ENCODE measurements at regions of chr20 and their contacts with region 1.

Region 1: DNA sequence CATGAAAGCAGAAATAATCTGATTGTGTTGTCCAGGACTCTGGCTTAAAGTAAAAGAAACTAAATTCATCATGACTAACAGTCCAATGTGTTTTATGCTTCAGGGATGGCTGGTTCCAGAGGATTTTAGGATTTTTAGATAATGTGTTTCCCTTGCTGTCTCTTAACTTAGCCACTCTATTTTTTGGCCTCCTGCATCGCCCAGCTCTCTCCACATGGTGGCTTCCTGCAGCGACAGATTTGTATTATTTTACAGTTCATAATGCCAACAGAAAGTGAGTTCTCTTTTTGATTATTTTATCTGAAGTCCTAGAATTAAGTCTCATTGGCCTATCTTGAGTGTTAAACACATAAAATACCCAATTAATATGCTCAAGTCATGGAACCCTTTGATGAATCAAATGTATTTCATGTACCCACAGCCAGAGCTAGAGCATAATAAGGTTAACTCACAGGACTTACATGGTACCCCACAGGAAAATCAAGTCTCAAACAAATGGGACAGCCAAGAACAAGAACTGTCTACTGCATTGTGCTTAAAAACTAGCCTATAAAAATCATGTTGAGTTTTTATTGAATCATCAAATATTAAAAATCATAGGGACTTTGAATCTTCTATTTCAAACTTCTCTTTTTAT is 582.5 kb downstream of the DOK5 start:
- DNase-seq: no peak
- ATAC-seq: no peak
- H3K4me3 ChIP-seq: no peak overlapping the region
- H3K27ac ChIP-seq: no peak overlapping the region
- H3K4me1 ChIP-seq: no peaks in the 10 kb centered on the region
- H3K27me3 ChIP-seq: no peaks in the 10 kb centered on the region
- CTCF ChIP-seq: no peak
- POLR2A ChIP-seq: no peak

Region 2: GRCh38 chr20:54510546-54511139 is 547.3 kb before region 1 on chr20:
- in situ Hi-C with region 1: no loop called
- intact Hi-C with region 1: no loop called
- DNase-seq: peak; percentile 14 to 61
- ATAC-seq: peak; percentile 66 to 87
- H3K4me3 ChIP-seq: no peak overlapping the region
- H3K27ac ChIP-seq: peak overlapping the region; percentile 3 to 63 (median 28)
- H3K4me1 ChIP-seq: peaks cover 6 to 9% of the 10 kb centered on the region in 2 donors
- H3K27me3 ChIP-seq: no peaks in the 10 kb centered on the region
- CTCF ChIP-seq: no peak
- POLR2A ChIP-seq: no peak

Region 3: GRCh38 chr20:54929195-54929594 is 128.7 kb before region 1 on chr20:
- in situ Hi-C with region 1: no loop called
- intact Hi-C with region 1: no loop called
- DNase-seq: no peak
- ATAC-seq: no peak
- H3K4me3 ChIP-seq: no peak overlapping the region
- H3K27ac ChIP-seq: no peak overlapping the region
- H3K4me1 ChIP-seq: no peaks in the 10 kb centered on the region
- H3K27me3 ChIP-seq: no peaks in the 10 kb centered on the region
- CTCF ChIP-seq: no peak
- POLR2A ChIP-seq: no peak

Region 4: GRCh38 chr20:54995553-54995952 is 62.3 kb before region 1 on chr20:
- in situ Hi-C with region 1: loop called in 1 of 4 experiments (anchors 10 kb)
- intact Hi-C with region 1: no loop called
- DNase-seq: no peak
- ATAC-seq: no peak
- H3K4me3 ChIP-seq: no peak overlapping the region
- H3K27ac ChIP-seq: no peak overlapping the region
- H3K4me1 ChIP-seq: no peaks in the 10 kb centered on the region
- H3K27me3 ChIP-seq: no peaks in the 10 kb centered on the region
- CTCF ChIP-seq: no peak
- POLR2A ChIP-seq: no peak

Region 5: GRCh38 chr20:55269913-55270312 is 212.0 kb after region 1 on chr20:
- in situ Hi-C with region 1: no loop called
- intact Hi-C with region 1: no loop called
- DNase-seq: no peak
- ATAC-seq: no peak
- H3K4me3 ChIP-seq: no peak overlapping the region
- H3K27ac ChIP-seq: no peak overlapping the region
- H3K4me1 ChIP-seq: peaks cover 0 to 6% of the 10 kb centered on the region in 2 donors
- H3K27me3 ChIP-seq: no peaks in the 10 kb centered on the region
- CTCF ChIP-seq: no peak
- POLR2A ChIP-seq: no peak